ENCODE measurements at regions of chr1 and their contacts with region 1.

Region 1: GRCh38 chr1:47192458-47193384 is 2.9 kb upstream of the PDZK1IP1 start:
- DNase-seq: peak; percentile 74
- ATAC-seq: peak; percentile 66
- H3K4me3 ChIP-seq: no peak overlapping the region
- H3K4me3 Mint-ChIP-seq: no peak overlapping the region
- H3K27ac ChIP-seq: no peak overlapping the region
- H3K27ac Mint-ChIP-seq: no peak overlapping the region
- H3K4me1 ChIP-seq: no peaks in the 10 kb centered on the region
- H3K4me1 Mint-ChIP-seq: no peaks in the 10 kb centered on the region
- H3K27me3 ChIP-seq: no peaks in the 10 kb centered on the region
- H3K27me3 Mint-ChIP-seq: peaks cover 10% of the 10 kb centered on the region
- CTCF ChIP-seq: peak; percentile 97

Region 2: GRCh38 chr1:47067097-47067594 is 125.6 kb before region 1 on chr1 and contains the start of gene CYP4Z1:
- CTCF ChIA-PET with region 1: no interaction called
- POLR2A ChIA-PET with region 1: no interaction called
- intact Hi-C with region 1: no loop called
- DNase-seq: no peak
- ATAC-seq: no peak
- H3K4me3 ChIP-seq: no peak within 1 kb of the TSS
- H3K4me3 Mint-ChIP-seq: no peak within 1 kb of the TSS
- H3K27ac ChIP-seq: no peak within 1 kb of the TSS
- H3K27ac Mint-ChIP-seq: no peak within 1 kb of the TSS
- H3K4me1 ChIP-seq: no peaks in the 10 kb centered on the region
- H3K4me1 Mint-ChIP-seq: no peaks in the 10 kb centered on the region
- H3K27me3 ChIP-seq: no peaks in the 10 kb centered on the region
- H3K27me3 Mint-ChIP-seq: peaks cover 6% of the 10 kb centered on the region
- CTCF ChIP-seq: no peak
- total RNA-seq, gene CYP4Z1: not detected in 2 replicates

Region 3: GRCh38 chr1:47179017-47179987 is 13.4 kb before region 1 on chr1:
- CTCF ChIA-PET with region 1: interaction called, 31 read pairs
- POLR2A ChIA-PET with region 1: no interaction called
- intact Hi-C with region 1: no loop called
- DNase-seq: peak; percentile 69
- ATAC-seq: peak; percentile 69
- H3K4me3 ChIP-seq: peak overlapping the region in 3 of 5 experiments; percentile 18 to 45 (median 31)
- H3K4me3 Mint-ChIP-seq: peak overlapping the region; percentile 83
- H3K27ac ChIP-seq: no peak overlapping the region
- H3K27ac Mint-ChIP-seq: peak overlapping the region; percentile 1
- H3K4me1 ChIP-seq: peaks cover 6 to 11% of the 10 kb centered on the region in 2 donors
- H3K4me1 Mint-ChIP-seq: peaks cover 10% of the 10 kb centered on the region
- H3K27me3 ChIP-seq: peaks cover 0 to 25% (median 7%) of the 10 kb centered on the region in 4 experiments
- H3K27me3 Mint-ChIP-seq: peaks cover 50% of the 10 kb centered on the region
- CTCF ChIP-seq: peak; percentile 79

Region 4: GRCh38 chr1:47262787-47263413 is 70.2 kb after region 1 on chr1:
- CTCF ChIA-PET with region 1: interaction called, 13 read pairs
- POLR2A ChIA-PET with region 1: no interaction called
- intact Hi-C with region 1: loop called (anchors 5 kb)
- DNase-seq: peak; percentile 40
- ATAC-seq: peak; percentile 41
- H3K4me3 ChIP-seq: no peak overlapping the region
- H3K4me3 Mint-ChIP-seq: no peak overlapping the region
- H3K27ac ChIP-seq: no peak overlapping the region
- H3K27ac Mint-ChIP-seq: no peak overlapping the region
- H3K4me1 ChIP-seq: no peaks in the 10 kb centered on the region
- H3K4me1 Mint-ChIP-seq: no peaks in the 10 kb centered on the region
- H3K27me3 ChIP-seq: no peaks in the 10 kb centered on the region
- H3K27me3 Mint-ChIP-seq: no peaks in the 10 kb centered on the region
- CTCF ChIP-seq: peak; percentile 72

Region 5: GRCh38 chr1:47710329-47711071 is 517.8 kb after region 1 on chr1:
- CTCF ChIA-PET with region 1: interaction called, 36 read pairs
- POLR2A ChIA-PET with region 1: no interaction called
- intact Hi-C with region 1: no loop called
- DNase-seq: peak; percentile 64
- ATAC-seq: peak; percentile 65
- H3K4me3 ChIP-seq: peak overlapping the region in 1 of 5 experiments; percentile 38
- H3K4me3 Mint-ChIP-seq: peak overlapping the region; percentile 15
- H3K27ac ChIP-seq: no peak overlapping the region
- H3K27ac Mint-ChIP-seq: no peak overlapping the region
- H3K4me1 ChIP-seq: peaks cover 21 to 24% of the 10 kb centered on the region in 2 donors
- H3K4me1 Mint-ChIP-seq: peaks cover 17% of the 10 kb centered on the region
- H3K27me3 ChIP-seq: peaks cover 0 to 79% (median 32%) of the 10 kb centered on the region in 4 experiments
- H3K27me3 Mint-ChIP-seq: peaks cover 65% of the 10 kb centered on the region
- CTCF ChIP-seq: peak; percentile 88

Region 6: GRCh38 chr1:47717341-47717740 is 524.6 kb after region 1 on chr1:
- CTCF ChIA-PET with region 1: interaction called, 11 read pairs
- POLR2A ChIA-PET with region 1: no interaction called
- intact Hi-C with region 1: no loop called
- DNase-seq: no peak
- ATAC-seq: no peak
- H3K4me3 ChIP-seq: no peak overlapping the region
- H3K4me3 Mint-ChIP-seq: no peak overlapping the region
- H3K27ac ChIP-seq: no peak overlapping the region
- H3K27ac Mint-ChIP-seq: no peak overlapping the region
- H3K4me1 ChIP-seq: no peaks in the 10 kb centered on the region
- H3K4me1 Mint-ChIP-seq: no peaks in the 10 kb centered on the region
- H3K27me3 ChIP-seq: peaks cover 0 to 23% (median 13%) of the 10 kb centered on the region in 4 experiments
- H3K27me3 Mint-ChIP-seq: peaks cover 68% of the 10 kb centered on the region
- CTCF ChIP-seq: no peak

Region 7: DNA sequence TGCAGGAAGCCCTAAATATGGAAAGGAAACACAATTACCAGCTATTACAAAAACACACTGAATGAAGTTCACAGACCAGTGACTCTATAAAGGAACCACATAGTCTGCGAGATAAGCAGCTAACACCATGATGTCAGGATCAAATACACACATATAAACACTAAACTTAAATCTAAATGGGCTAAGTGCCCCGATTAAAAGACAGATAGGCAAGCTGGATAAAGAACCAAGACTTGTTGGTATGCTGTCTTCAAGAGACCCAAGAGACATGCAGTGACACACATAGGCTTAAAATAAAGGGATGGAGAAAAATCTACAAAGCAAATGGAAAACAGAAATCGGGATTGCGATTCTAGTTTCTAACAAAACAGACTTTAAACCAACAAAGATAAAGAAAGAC is 1151.7 kb after region 1 on chr1:
- CTCF ChIA-PET with region 1: no interaction called
- POLR2A ChIA-PET with region 1: no interaction called
- intact Hi-C with region 1: no loop called
- DNase-seq: no peak
- ATAC-seq: no peak
- H3K4me3 ChIP-seq: no peak overlapping the region
- H3K4me3 Mint-ChIP-seq: no peak overlapping the region
- H3K27ac ChIP-seq: no peak overlapping the region
- H3K27ac Mint-ChIP-seq: no peak overlapping the region
- H3K4me1 ChIP-seq: no peaks in the 10 kb centered on the region
- H3K4me1 Mint-ChIP-seq: no peaks in the 10 kb centered on the region
- H3K27me3 ChIP-seq: no peaks in the 10 kb centered on the region
- H3K27me3 Mint-ChIP-seq: no peaks in the 10 kb centered on the region
- CTCF ChIP-seq: no peak